ENCODE measurements at regions of chr19 and their contacts with region 1.

Region 1: GRCh38 chr19:45340232-45340898 is at the start of gene KLC3:
- DNase-seq: no peak
- ATAC-seq: no peak
- H3K4me3 ChIP-seq: peak within 1 kb of the TSS in 2 of 4 donors; percentile 18 to 31
- H3K27ac ChIP-seq: no peak within 1 kb of the TSS
- H3K4me1 ChIP-seq: peaks cover 4 to 6% of the 10 kb centered on the region in 2 donors
- H3K27me3 ChIP-seq: peaks cover 3 to 18% (median 17%) of the 10 kb centered on the region in 3 donors
- CTCF ChIP-seq: no peak
- POLR2A ChIP-seq: no peak
- total RNA-seq, gene KLC3: 2.7 TPM in 1 of 4 donors, not detected in the others

Region 2: GRCh38 chr19:45164577-45165335 is 175.6 kb before region 1 on chr19:
- in situ Hi-C with region 1: no loop called
- intact Hi-C with region 1: loop called (anchors 2 kb)
- DNase-seq: peak in 1 of 2 donors; percentile 36
- ATAC-seq: no peak
- H3K4me3 ChIP-seq: no peak overlapping the region
- H3K27ac ChIP-seq: no peak overlapping the region
- H3K4me1 ChIP-seq: no peaks in the 10 kb centered on the region
- H3K27me3 ChIP-seq: peaks cover 21 to 22% (median 22%) of the 10 kb centered on the region in 3 donors
- CTCF ChIP-seq: no peak
- POLR2A ChIP-seq: no peak

Region 3: GRCh38 chr19:45245334-45245787 is 95.0 kb before region 1 on chr19 and contains the start of gene EXOC3L2:
- in situ Hi-C with region 1: loop called in 2 of 4 experiments (anchors 5 kb)
- intact Hi-C with region 1: loop called (anchors 1 kb)
- DNase-seq: no peak
- ATAC-seq: no peak
- H3K4me3 ChIP-seq: no peak within 1 kb of the TSS
- H3K27ac ChIP-seq: peak within 1 kb of the TSS in 3 of 4 donors; percentile 35 to 61 (median 36)
- H3K4me1 ChIP-seq: peaks cover 3 to 7% of the 10 kb centered on the region in 2 donors
- H3K27me3 ChIP-seq: no peaks in the 10 kb centered on the region
- CTCF ChIP-seq: no peak
- POLR2A ChIP-seq: no peak
- total RNA-seq, gene EXOC3L2: 0.46 to 0.55 TPM in 2 of 4 donors, not detected in the others

Region 4: GRCh38 chr19:45250832-45251451 is 89.4 kb before region 1 on chr19 and contains the start of gene MARK4:
- in situ Hi-C with region 1: loop called in 2 of 4 experiments (anchors 5 kb)
- intact Hi-C with region 1: loop called (anchors 1 kb)
- DNase-seq: peak; percentile 11 to 38
- ATAC-seq: peak; percentile 73 to 78
- H3K4me3 ChIP-seq: peak within 1 kb of the TSS; percentile 80 to 91 (median 86)
- H3K27ac ChIP-seq: peak within 1 kb of the TSS; percentile 76 to 89 (median 80)
- H3K4me1 ChIP-seq: peaks cover 23 to 26% of the 10 kb centered on the region in 2 donors
- H3K27me3 ChIP-seq: no peaks in the 10 kb centered on the region
- CTCF ChIP-seq: peak in 1 of 5 experiments; percentile 7
- POLR2A ChIP-seq: peak; percentile 31 to 48
- total RNA-seq, gene MARK4: 12.2 to 42.5 (median 22.1) TPM

Region 5: DNA sequence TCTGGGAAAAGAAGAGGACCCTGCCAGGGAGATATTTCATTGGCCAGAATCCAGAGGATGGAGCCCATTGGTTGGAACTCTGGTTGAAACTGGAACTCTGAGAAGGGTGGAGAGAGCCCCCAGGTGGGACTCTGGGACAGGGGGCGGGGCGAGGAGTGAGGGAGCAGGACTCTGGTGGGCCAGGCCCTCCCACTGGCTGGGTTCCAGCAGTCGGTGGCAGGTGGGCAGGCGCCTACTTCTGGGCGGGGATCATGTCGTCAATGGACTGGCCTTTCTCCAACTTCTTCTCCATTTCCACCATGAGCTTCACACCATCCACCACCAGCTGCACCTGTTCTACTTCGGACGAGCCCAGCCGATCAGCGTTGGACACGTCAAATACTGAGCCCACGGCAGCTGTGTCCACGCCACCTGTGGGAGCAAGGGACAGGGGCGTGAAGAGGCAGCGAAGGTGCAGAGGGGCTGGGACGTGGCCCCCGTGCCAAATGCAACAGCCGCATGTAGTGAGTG is 33.8 kb before region 1 on chr19:
- in situ Hi-C with region 1: no loop called
- intact Hi-C with region 1: loop called (anchors 5 kb)
- DNase-seq: peak in 1 of 2 donors; percentile 70
- ATAC-seq: peak in 1 of 2 donors; percentile 8
- H3K4me3 ChIP-seq: no peak overlapping the region
- H3K27ac ChIP-seq: peak overlapping the region; percentile 76 to 100 (median 98)
- H3K4me1 ChIP-seq: peaks cover 20 to 21% of the 10 kb centered on the region in 2 donors
- H3K27me3 ChIP-seq: no peaks in the 10 kb centered on the region
- CTCF ChIP-seq: no peak
- POLR2A ChIP-seq: no peak